ENCODE measurements at regions of chrX and their contacts with region 1.

Region 1: DNA sequence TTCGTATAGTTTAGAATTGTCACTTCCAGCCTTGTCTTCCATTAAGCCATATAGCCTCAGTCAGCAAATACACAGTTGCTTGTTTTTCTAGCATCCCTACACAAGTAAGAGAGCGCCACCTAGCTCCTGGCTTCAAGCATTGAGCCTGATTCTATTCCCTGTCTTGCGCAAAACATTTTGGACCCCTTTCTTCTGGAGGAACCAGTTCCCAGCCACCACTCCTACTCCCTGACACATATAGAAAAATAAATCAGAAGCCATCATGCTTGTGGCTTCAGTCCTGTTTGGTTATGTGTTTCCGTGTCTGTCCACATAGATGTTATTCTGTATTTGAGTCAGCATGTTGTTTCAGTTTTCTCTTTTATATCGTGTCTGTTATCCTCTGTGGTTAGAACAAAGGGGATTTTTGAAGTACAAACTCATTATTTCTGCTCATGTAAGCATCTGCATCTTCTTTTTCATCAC is 59.9 kb downstream of the GK start:
- DNase-seq: peak; percentile 65
- H3K4me3 Mint-ChIP-seq: no peak overlapping the region
- H3K27ac Mint-ChIP-seq: peak overlapping the region; percentile 82
- H3K4me1 Mint-ChIP-seq: peaks cover 22% of the 10 kb centered on the region
- H3K27me3 Mint-ChIP-seq: no peaks in the 10 kb centered on the region

Region 2: DNA sequence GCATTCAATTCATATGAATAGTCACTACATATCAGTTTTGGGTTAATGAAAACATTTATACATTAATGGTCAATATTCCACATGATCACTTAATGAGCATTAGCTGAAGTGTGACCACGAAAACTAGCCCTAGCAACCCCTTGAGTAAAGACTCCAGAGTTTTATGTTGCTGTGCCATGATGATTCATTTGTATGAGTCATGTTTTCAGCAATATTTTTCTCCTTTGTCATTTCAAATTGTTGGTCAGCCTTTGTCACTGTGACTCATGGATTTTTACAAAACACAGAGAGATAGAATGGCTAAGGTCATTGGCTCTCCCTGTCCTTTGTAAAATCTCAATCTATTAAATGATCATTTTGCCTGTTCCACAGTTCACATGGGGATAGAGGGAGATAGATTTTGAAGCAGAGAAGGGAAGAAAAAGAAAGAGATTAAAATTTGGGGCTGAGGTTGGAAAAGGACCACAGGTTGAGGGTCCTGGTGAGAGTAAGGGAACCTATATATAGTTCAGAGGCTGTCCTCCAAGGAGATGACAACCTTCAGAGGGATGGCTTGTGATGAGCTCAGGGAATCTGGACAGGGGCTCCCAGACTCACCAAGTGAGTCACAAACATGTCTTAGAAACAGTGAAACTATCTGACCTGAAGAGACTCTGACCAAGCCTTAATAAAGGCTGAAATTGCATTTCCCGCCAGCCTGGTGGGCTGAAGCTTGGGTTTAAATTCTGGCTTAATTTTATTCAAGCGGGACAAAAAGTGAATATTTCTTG is 429.5 kb before region 1 on chrX:
- CTCF ChIA-PET with region 1: no interaction called
- intact Hi-C with region 1: loop called (anchors 5 kb)
- DNase-seq: no peak
- H3K4me3 Mint-ChIP-seq: no peak overlapping the region
- H3K27ac Mint-ChIP-seq: no peak overlapping the region
- H3K4me1 Mint-ChIP-seq: peaks cover 5% of the 10 kb centered on the region
- H3K27me3 Mint-ChIP-seq: no peaks in the 10 kb centered on the region

Region 3: GRCh38 chrX:30635630-30636029 is 77.5 kb before region 1 on chrX:
- CTCF ChIA-PET with region 1: interaction called, 4 read pairs
- intact Hi-C with region 1: loop called (anchors 1 kb)
- DNase-seq: peak; percentile 19
- H3K4me3 Mint-ChIP-seq: no peak overlapping the region
- H3K27ac Mint-ChIP-seq: no peak overlapping the region
- H3K4me1 Mint-ChIP-seq: peaks cover 2% of the 10 kb centered on the region
- H3K27me3 Mint-ChIP-seq: no peaks in the 10 kb centered on the region

Region 4: DNA sequence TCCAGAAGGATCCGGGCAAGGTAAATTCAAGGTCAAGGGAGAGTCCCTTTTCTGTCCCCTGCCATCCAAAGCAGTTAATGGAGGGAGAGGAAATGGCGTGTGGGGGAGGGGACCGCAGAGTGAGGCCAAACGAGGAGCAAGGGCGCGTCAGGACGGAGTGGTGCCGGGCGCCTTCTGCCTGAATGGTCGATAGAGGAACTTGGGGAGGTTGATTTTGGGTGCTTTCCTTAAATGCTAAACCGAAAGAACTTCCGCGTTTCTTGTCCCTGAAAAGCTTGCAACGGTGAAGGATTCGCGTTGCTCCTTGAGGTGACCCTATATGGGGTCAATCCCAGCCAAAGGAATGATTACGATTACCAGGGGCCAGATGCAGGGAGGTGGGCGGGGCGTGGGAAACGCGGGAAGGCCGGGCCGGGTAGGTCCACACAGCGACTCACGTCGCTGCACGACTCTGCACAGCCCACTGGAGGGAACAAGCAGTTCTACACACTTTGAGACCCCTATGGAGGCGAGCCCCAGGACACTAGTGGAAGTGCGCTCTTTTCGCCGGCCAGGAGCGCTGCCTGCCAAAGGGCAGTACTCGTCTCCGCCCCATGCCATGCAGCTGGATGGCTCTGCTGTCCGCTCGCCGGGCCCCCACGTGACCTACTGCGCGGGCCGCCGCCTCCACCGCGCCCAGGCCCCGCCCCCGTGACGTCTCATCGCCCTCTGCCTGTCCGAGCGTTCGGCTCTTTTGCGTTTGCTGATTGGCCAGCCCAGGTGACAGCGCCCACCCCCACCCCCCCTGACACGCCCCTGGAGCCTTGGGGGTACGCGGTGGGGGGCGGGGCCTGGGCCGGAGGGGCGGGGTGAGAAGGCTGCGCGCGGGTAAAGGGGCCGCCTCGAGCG is 60.3 kb before region 1 on chrX:
- CTCF ChIA-PET with region 1: no interaction called
- intact Hi-C with region 1: loop called (anchors 1 kb)
- DNase-seq: peak; percentile 93
- H3K4me3 Mint-ChIP-seq: peak overlapping the region; percentile 90
- H3K27ac Mint-ChIP-seq: peak overlapping the region; percentile 93
- H3K4me1 Mint-ChIP-seq: peaks cover 31% of the 10 kb centered on the region
- H3K27me3 Mint-ChIP-seq: no peaks in the 10 kb centered on the region

Region 5: GRCh38 chrX:30781711-30782444 is 68.8 kb after region 1 on chrX:
- CTCF ChIA-PET with region 1: no interaction called
- intact Hi-C with region 1: loop called (anchors 1 kb)
- DNase-seq: no peak
- H3K4me3 Mint-ChIP-seq: no peak overlapping the region
- H3K27ac Mint-ChIP-seq: no peak overlapping the region
- H3K4me1 Mint-ChIP-seq: peaks cover 21% of the 10 kb centered on the region
- H3K27me3 Mint-ChIP-seq: peaks cover 2% of the 10 kb centered on the region

Region 6: GRCh38 chrX:30906726-30907125 is 193.6 kb after region 1 on chrX:
- CTCF ChIA-PET with region 1: no interaction called
- intact Hi-C with region 1: no loop called
- DNase-seq: no peak
- H3K4me3 Mint-ChIP-seq: no peak overlapping the region
- H3K27ac Mint-ChIP-seq: no peak overlapping the region
- H3K4me1 Mint-ChIP-seq: peaks cover 8% of the 10 kb centered on the region
- H3K27me3 Mint-ChIP-seq: no peaks in the 10 kb centered on the region

Region 7: DNA sequence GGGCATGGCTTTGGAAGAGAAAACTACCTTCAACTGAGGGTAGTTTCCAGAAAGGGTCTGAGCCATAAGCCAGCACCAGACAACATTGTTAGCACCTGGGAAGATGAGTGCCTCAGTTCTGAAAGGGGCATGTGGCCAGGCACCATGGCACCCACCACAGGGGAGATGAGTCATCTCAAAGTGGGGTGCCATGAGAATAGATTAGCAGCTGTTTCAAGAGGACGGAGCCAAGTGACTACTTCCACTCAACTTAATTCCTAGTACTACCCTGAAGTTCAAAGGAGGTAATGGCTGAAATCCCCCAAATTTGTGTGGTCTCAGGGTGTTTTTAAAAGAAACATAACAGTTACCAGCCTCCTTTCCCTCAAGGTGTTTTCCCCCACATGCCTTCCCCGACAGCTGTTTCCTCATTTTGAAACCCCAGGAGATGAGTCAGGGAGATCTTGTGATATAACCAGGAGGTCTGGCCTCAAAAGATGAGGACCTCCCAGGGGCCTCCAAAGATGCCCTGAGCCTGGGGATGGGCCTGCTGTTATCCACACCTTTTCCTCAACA is 386.5 kb after region 1 on chrX:
- CTCF ChIA-PET with region 1: no interaction called
- intact Hi-C with region 1: loop called (anchors 1 kb)
- DNase-seq: peak; percentile 67
- H3K4me3 Mint-ChIP-seq: no peak overlapping the region
- H3K27ac Mint-ChIP-seq: no peak overlapping the region
- H3K4me1 Mint-ChIP-seq: peaks cover 4% of the 10 kb centered on the region
- H3K27me3 Mint-ChIP-seq: no peaks in the 10 kb centered on the region